Pancreas (tissue), 10 donors: ENCODE measurements at regions of chr18 and their contacts with region 1.

Region 1: DNA sequence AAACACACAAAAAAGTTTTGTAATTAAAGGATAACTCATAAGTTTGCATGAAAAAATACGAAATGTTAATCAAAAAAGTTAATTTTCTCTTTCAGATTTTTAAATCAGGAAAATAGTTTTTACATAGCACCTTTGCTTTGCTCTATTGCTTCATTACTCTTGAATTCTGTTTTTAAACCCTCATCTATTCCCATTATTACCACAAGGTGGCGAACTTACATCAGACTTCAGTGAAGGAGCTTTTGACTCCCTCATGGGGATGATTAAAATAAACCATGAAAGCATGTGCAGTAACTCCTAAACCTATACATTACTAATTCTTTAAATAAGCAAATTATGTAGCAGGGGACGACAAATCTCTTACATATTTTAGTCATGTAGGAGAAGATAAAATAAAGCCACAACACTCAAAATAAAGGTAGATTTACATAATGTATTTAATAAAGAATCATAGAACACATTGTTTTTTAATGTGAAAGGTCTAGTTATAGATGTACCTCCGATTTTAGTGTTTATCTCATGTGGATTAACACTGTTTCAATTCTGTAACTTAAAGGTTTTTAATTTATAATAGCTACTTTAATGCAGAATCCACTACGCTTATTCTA is 105.2 kb downstream of the NETO1 start:
- DNase-seq: no peak
- ATAC-seq: peak in 3 of 4 donors; percentile 64 to 71 (median 69)
- H3K4me3 ChIP-seq: no peak overlapping the region
- H3K27ac ChIP-seq: no peak overlapping the region
- H3K4me1 ChIP-seq: no peaks in the 10 kb centered on the region
- H3K27me3 ChIP-seq: peaks cover 0 to 5% (median 2%) of the 10 kb centered on the region in 4 donors
- CTCF ChIP-seq: peak; percentile 60 to 78 (median 64)

Region 2: GRCh38 chr18:72965611-72966010 is 203.0 kb after region 1 on chr18:
- intact Hi-C with region 1: no loop called
- DNase-seq: no peak
- ATAC-seq: no peak
- H3K4me3 ChIP-seq: no peak overlapping the region
- H3K27ac ChIP-seq: no peak overlapping the region
- H3K4me1 ChIP-seq: no peaks in the 10 kb centered on the region
- H3K27me3 ChIP-seq: no peaks in the 10 kb centered on the region
- CTCF ChIP-seq: no peak

Region 3: GRCh38 chr18:73835656-73836364 is 1073.2 kb after region 1 on chr18:
- intact Hi-C with region 1: loop called in 2 of 3 experiments (anchors 5 to 10 kb)
- DNase-seq: no peak
- ATAC-seq: no peak
- H3K4me3 ChIP-seq: no peak overlapping the region
- H3K27ac ChIP-seq: no peak overlapping the region
- H3K4me1 ChIP-seq: no peaks in the 10 kb centered on the region
- H3K27me3 ChIP-seq: no peaks in the 10 kb centered on the region
- CTCF ChIP-seq: no peak

Region 4: DNA sequence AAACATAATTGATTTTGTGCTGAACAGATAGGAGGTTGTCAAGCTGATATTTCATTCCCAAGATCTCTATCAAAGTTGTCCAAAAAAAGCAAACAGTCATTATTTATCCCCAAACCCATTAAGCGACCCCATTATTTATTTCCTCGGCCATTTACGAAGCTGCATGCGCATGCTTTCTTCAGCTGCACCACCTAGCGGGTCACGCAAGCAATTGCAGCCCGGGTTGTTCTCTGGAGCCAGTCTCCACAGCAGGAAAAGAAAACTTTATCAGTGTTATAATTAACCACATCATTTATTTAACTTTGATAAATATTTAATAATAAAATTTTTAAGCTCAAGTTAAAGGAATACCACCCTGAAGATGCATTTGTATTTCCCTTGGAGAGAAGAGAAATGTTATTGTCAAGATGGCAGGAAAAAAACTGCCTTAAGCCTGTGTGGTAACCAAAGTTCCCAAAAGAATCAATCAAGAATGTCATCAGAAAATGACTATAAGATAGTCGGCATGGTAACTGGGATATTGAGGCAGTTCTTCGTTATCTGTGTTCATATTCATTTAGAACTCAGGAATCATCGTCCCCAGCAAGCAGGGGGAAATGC is 1080.3 kb after region 1 on chr18:
- intact Hi-C with region 1: loop called in 2 of 3 experiments (anchors 5 to 10 kb)
- DNase-seq: peak in 4 of 6 donors; percentile 19 to 67 (median 44)
- ATAC-seq: peak in 3 of 4 donors; percentile 80 to 88 (median 86)
- H3K4me3 ChIP-seq: no peak overlapping the region
- H3K27ac ChIP-seq: no peak overlapping the region
- H3K4me1 ChIP-seq: peaks cover 0 to 5% (median 0%) of the 10 kb centered on the region in 3 donors
- H3K27me3 ChIP-seq: no peaks in the 10 kb centered on the region
- CTCF ChIP-seq: peak; percentile 66 to 94 (median 86)